Activated naive CD4-positive, alpha-beta T cell treated with anti-CD3 and anti-CD28 coated beads, Interleukin-2, amount 10 ng/mL, durations not matched to agents 7 days and 5 days (primary cell): ENCODE measurements at regions of chr7 and their contacts with region 1.

Region 1: DNA sequence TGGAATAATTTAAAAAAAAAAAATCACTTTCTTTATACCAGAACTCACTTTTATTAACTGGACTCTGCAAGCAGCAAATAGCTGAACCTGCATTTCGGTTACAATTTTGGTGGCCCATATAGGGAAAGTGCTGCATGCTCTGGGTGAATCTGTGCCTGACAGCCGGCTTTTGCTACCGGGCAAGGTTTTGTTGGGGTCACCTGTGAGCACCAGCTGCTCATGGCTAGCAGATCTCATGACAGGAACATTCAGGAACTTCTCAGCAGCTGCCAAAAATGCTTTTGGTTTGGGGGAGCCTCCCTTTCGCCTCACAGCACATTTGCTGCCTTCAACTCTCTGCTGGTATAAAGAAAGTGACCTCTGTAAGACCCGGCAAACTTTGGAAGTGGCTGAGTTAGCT is 13.2 kb upstream of the CREB3L2 start:
- DNase-seq: no peak
- H3K4me3 Mint-ChIP-seq: no peak overlapping the region
- H3K27ac Mint-ChIP-seq: no peak overlapping the region
- H3K4me1 Mint-ChIP-seq: no peaks in the 10 kb centered on the region
- H3K27me3 Mint-ChIP-seq: peaks cover 8% of the 10 kb centered on the region

Region 2: GRCh38 chr7:138002096-138002827 is 12.8 kb before region 1 on chr7:
- CTCF ChIA-PET with region 1: interaction called, 25 read pairs
- DNase-seq: peak; percentile 98
- H3K4me3 Mint-ChIP-seq: peak overlapping the region; percentile 93
- H3K27ac Mint-ChIP-seq: peak overlapping the region; percentile 95
- H3K4me1 Mint-ChIP-seq: peaks cover 43% of the 10 kb centered on the region
- H3K27me3 Mint-ChIP-seq: peaks cover 3% of the 10 kb centered on the region